A549 (cell line): ENCODE measurements at regions of chr6 and their contacts with region 1.

Region 1: DNA sequence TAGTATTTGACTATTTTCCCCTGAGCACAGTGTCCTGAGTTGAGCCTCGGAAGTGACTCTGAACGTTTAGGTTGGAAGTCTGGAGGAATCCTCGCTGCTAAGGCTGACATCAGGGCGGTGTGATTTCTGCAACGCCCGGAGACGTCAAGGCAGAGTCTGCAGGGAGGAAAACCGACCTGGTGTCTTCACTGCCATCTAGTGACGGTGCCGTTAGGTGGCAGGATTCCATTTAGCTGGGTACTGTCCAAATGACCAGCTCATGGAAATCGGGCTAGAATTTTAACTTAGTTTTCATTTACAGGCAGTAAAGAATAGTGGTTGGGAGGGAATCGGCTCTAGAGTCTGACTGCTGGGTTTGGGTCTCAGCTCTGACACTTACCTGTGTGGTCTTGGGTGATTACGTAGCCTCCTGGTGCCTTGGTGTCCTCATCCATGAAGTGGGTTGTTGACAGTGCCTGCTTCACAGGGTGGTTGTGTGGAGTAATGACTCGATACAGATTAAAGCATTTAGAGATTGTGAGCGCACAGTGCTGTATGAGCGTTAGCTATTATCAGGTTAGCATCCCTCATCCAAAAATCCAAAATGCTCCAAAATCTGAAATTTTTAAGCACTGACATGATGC is 35.0 kb downstream of the FOXF2 start:
- DNase-seq: peak; percentile 58 to 63
- ATAC-seq: peak; percentile 95 to 99
- H3K4me3 ChIP-seq: no peak overlapping the region
- H3K27ac ChIP-seq: no peak overlapping the region
- H3K4me1 ChIP-seq: peaks cover 5% of the 10 kb centered on the region; the same call in 2 of the 3 replicates
- CTCF ChIP-seq: peak; percentile 57
- EP300 ChIP-seq: no peak
- POLR2A ChIP-seq: no peak
- RAD21 ChIP-seq: peak; percentile 49 to 58; a peak in 4 of 5 replicates

Region 2: DNA sequence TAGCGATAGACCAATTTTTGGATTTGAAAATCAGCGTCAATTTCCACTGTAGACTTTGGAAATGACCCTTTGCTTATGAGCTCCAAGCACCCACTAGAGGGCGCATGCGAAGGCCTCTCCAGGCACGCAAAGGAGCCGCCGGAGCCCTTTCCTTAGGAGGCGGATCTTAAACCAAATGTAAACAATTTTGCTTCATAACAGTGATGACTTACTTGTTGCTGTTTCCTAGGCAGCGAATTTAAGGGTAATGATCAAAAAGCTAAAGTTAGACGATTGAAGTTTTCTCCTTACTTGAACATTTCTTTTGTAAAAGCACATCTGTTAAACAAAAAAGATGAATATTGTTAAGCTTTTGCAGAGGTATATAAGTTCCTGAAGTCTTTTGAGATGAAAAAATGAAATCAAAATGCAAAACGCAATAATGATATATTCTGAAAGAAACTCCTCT is 702.3 kb before region 1 on chr6:
- CTCF ChIA-PET with region 1: interaction called, 13 read pairs
- POLR2A ChIA-PET with region 1: no interaction called
- DNase-seq: peak; percentile 78 to 79
- ATAC-seq: peak; percentile 90 to 97
- H3K4me3 ChIP-seq: no peak overlapping the region
- H3K27ac ChIP-seq: no peak overlapping the region
- H3K4me1 ChIP-seq: no peaks in the 10 kb centered on the region
- CTCF ChIP-seq: peak; percentile 78
- EP300 ChIP-seq: no peak
- POLR2A ChIP-seq: no peak
- RAD21 ChIP-seq: peak; percentile 51 to 54; a peak in 4 of 5 replicates

Region 3: DNA sequence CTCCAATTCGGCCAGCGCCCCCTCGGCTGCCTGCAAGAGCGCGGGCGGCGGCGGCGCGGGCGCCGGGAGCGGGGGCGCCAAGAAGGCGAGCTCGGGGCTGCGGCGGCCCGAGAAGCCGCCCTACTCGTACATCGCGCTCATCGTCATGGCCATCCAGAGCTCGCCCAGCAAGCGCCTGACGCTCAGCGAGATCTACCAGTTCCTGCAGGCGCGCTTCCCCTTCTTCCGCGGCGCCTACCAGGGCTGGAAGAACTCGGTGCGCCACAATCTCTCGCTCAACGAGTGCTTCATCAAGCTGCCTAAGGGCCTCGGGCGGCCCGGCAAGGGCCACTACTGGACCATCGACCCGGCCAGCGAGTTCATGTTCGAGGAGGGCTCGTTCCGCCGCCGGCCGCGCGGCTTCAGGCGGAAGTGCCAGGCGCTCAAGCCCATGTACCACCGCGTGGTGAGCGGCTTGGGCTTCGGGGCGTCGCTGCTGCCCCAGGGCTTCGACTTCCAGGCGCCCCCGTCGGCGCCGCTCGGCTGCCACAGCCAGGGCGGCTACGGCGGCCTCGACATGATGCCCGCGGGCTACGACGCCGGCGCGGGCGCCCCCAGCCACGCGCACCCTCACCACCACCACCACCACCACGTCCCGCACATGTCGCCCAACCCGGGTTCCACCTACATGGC is 34.1 kb before region 1 on chr6:
- CTCF ChIA-PET with region 1: interaction called, 16 read pairs
- POLR2A ChIA-PET with region 1: no interaction called
- DNase-seq: peak in 1 of 2 experiments; percentile 33
- ATAC-seq: peak; percentile 54 to 65
- H3K4me3 ChIP-seq: peak overlapping the region; percentile 85
- H3K27ac ChIP-seq: peak overlapping the region; percentile 92 to 93
- H3K4me1 ChIP-seq: peaks cover 11% of the 10 kb centered on the region; the same call in 1 of the 3 replicates
- CTCF ChIP-seq: no peak
- EP300 ChIP-seq: no peak
- POLR2A ChIP-seq: no peak
- RAD21 ChIP-seq: no peak

Region 4: GRCh38 chr6:1396952-1397868 is 27.2 kb before region 1 on chr6:
- CTCF ChIA-PET with region 1: interaction called, 17 read pairs
- POLR2A ChIA-PET with region 1: no interaction called
- DNase-seq: peak; percentile 55 to 66
- ATAC-seq: peak; percentile 74 to 93
- H3K4me3 ChIP-seq: no peak overlapping the region
- H3K27ac ChIP-seq: no peak overlapping the region
- H3K4me1 ChIP-seq: peaks cover 7% of the 10 kb centered on the region; the same call in 2 of the 3 replicates
- CTCF ChIP-seq: peak; percentile 83
- EP300 ChIP-seq: no peak
- POLR2A ChIP-seq: no peak
- RAD21 ChIP-seq: peak; percentile 74 to 75

Region 5: GRCh38 chr6:1436334-1437306 is 12.2 kb after region 1 on chr6:
- CTCF ChIA-PET with region 1: interaction called, 49 read pairs
- POLR2A ChIA-PET with region 1: no interaction called
- DNase-seq: peak; percentile 61 to 62
- ATAC-seq: peak; percentile 96 to 98
- H3K4me3 ChIP-seq: no peak overlapping the region
- H3K27ac ChIP-seq: peak overlapping the region in 1 of 2 experiments; percentile 51; a peak in 3 of 6 replicates
- H3K4me1 ChIP-seq: peaks cover 5% of the 10 kb centered on the region; the same call in 2 of the 3 replicates
- CTCF ChIP-seq: peak; percentile 67
- EP300 ChIP-seq: no peak
- POLR2A ChIP-seq: no peak
- RAD21 ChIP-seq: peak; percentile 77 to 82